K562 (cell line): ENCODE measurements at regions of chr11 and their contacts with region 1.

Region 1: DNA sequence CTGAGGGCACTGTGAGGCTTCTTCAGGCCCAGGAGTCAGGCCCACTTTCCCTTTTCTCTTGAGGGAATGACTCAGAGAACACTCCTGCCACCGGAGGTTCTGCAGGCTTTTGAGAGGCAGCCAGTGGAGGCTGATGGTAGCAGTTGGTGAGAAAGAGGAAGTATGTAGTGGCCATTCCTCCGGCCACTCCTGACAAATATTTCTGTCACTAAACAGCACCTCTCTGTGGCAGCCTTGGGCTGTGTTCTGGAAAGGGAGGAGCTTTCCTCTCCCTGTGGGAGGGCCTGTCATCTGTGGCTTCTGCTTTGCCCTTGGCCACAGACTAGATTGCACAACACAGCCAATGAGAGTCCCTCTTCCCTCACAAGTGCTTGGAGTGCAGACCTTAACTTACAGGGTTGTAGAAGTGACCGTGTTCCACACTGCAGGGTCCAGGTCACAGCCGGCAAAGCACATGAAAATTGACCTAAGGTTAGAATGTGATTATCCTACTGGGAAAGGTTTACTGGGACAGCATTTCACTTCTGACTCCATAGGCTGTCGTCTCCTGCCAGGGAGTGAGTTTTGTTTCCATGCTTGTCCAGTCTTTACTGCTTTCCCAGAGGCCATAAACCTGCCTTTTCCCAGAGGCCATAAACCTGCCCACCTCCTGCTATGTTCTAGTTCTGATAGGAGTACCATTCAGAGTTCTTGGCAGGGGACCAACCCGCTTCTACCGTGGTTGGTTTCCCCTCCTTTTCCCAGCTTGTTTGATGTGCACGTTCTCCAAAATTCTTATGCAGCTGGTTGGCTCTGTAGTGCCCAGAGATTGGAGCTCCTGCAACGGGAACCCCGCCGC is 33.3 kb downstream of the MARK2 start:
- DNase-seq: peak; percentile 85 to 95 (median 90)
- ATAC-seq: peak; percentile 100
- H3K4me3 ChIP-seq: no peak overlapping the region
- H3K27ac ChIP-seq: peak overlapping the region; percentile 64
- H3K4me1 ChIP-seq: peaks cover 35 to 39% of the 10 kb centered on the region in 2 experiments
- H3K27me3 ChIP-seq: no peaks in the 10 kb centered on the region
- CTCF ChIP-seq: peak; percentile 85 to 96 (median 89)
- EP300 ChIP-seq: peak; percentile 55
- POLR2A ChIP-seq: no peak
- RAD21 ChIP-seq: peak; percentile 90 to 92

Region 2: GRCh38 chr11:63882555-63883242 is 10.5 kb after region 1 on chr11:
- CTCF ChIA-PET with region 1: interaction called, 3 read pairs
- POLR2A ChIA-PET with region 1: interaction called, 11 read pairs
- in situ Hi-C with region 1: no loop called
- intact Hi-C with region 1: no loop called
- DNase-seq: no peak
- ATAC-seq: no peak
- H3K4me3 ChIP-seq: no peak overlapping the region
- H3K27ac ChIP-seq: no peak overlapping the region
- H3K4me1 ChIP-seq: peaks cover 14 to 26% of the 10 kb centered on the region in 2 experiments
- H3K27me3 ChIP-seq: no peaks in the 10 kb centered on the region
- CTCF ChIP-seq: no peak
- EP300 ChIP-seq: no peak
- POLR2A ChIP-seq: no peak
- RAD21 ChIP-seq: no peak

Region 3: DNA sequence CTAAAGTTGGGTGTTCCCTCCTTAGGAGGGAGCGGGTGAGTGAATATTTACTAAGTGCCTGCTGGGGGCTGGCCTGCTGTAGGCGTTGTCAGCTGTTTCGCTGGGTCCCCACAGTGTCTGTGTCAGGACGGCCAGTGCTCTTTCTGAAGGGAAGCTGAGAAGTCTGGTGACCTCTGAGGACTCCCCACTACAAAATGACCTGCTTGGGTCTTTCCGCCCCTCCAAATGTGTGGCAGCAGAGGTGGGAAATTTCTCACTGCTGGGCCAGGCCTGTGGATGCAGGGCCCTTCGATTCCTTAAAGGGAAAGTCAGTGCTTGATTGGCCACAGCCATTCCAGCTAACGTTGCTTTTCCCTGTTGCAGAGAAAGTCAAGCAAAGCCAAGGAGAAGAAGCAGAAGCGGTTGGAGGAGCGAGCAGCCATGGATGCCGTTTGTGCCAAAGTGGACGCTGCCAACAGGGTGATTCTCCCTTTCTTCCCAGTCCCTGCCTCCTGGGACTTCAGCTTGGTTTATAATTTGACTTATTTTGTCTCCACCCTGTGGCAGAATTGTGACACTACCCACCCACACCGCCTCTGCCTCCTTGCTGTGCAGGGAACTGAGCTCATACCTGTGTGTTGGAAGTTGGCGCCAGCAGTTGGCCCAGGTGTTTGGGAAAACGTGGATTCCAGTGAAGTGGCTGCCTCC is 73.4 kb after region 1 on chr11:
- CTCF ChIA-PET with region 1: no interaction called
- POLR2A ChIA-PET with region 1: no interaction called
- in situ Hi-C with region 1: no loop called
- intact Hi-C with region 1: no loop called
- DNase-seq: peak; percentile 58 to 67 (median 62)
- ATAC-seq: peak; percentile 89
- H3K4me3 ChIP-seq: no peak overlapping the region
- H3K27ac ChIP-seq: no peak overlapping the region; the same call in 2 of the 3 replicates
- H3K4me1 ChIP-seq: peaks cover 35 to 40% of the 10 kb centered on the region in 2 experiments
- H3K27me3 ChIP-seq: no peaks in the 10 kb centered on the region
- CTCF ChIP-seq: peak; percentile 69 to 78 (median 74)
- EP300 ChIP-seq: no peak
- POLR2A ChIP-seq: no peak
- RAD21 ChIP-seq: peak; percentile 72 to 79